A673 (cell line): ENCODE measurements at regions of chr5 and their contacts with region 1.

Region 1: DNA sequence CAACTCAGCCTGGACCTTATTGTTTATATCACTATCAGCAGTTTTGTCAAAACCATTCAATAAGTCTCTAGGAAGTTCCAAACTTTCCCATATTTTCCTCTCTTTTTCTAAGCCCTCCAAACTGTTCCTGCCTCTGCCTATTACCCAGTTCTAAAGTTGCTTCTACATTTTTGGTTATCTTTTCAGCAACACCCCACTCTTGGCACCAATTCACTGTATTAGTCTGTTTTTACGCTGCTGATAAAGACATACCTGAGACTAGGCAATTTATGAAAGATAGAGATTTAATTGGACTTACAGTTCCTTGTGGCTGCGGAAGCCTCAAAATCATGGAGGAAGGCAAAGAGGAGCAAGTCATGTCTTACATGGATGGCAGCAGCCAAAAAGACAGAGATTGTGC is 744.4 kb upstream of the ADAMTS16 start:
- DNase-seq: no peak
- H3K4me3 ChIP-seq: no peak overlapping the region
- H3K27ac ChIP-seq: no peak overlapping the region
- H3K4me1 ChIP-seq: no peaks in the 10 kb centered on the region
- H3K27me3 ChIP-seq: no peaks in the 10 kb centered on the region
- CTCF ChIP-seq: no peak

Region 2: DNA sequence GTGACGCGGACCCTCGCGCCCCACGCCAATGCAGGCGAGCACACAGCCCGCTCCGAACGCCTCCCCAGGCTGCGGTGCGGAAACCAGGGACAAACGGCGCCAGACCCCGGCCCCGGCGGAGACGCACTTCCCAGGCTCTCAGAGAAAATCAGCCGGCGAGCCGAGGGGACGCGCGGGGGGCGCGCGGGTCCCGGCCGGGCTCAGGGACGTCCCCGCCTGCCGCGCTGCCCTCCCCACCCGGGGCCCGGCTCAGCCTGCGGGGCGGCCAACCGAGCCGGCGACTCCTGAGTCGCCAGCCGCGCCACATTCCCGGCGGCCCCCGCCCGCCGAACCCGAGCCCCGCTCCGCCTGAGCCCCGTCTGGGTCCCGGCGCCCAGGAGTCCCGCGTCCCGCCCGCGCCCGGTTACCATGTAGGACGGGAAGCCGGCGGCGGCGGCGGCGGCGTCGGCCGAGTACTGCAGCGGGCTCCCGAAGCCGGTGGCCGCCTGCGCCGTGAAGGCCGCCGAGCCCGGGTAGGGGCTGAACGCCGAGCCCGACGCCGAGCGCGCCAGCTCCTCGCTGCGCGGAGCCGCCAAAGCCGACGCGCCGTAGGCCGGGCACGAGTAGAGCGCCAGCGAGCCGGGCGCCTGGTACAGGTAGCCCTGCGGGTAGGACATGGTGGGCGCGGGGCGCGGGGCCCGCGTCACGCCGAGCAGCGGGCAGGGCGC is 1644.8 kb before region 1 on chr5:
- CTCF ChIA-PET with region 1: no interaction called
- POLR2A ChIA-PET with region 1: no interaction called
- intact Hi-C with region 1: no loop called
- DNase-seq: no peak
- H3K4me3 ChIP-seq: no peak overlapping the region
- H3K27ac ChIP-seq: no peak overlapping the region
- H3K4me1 ChIP-seq: no peaks in the 10 kb centered on the region
- H3K27me3 ChIP-seq: peaks cover 11% of the 10 kb centered on the region
- CTCF ChIP-seq: no peak

Region 3: GRCh38 chr5:3931976-3932375 is 463.8 kb before region 1 on chr5:
- CTCF ChIA-PET with region 1: no interaction called
- POLR2A ChIA-PET with region 1: no interaction called
- intact Hi-C with region 1: no loop called
- DNase-seq: no peak
- H3K4me3 ChIP-seq: no peak overlapping the region
- H3K27ac ChIP-seq: no peak overlapping the region
- H3K4me1 ChIP-seq: no peaks in the 10 kb centered on the region
- H3K27me3 ChIP-seq: no peaks in the 10 kb centered on the region
- CTCF ChIP-seq: no peak

Region 4: DNA sequence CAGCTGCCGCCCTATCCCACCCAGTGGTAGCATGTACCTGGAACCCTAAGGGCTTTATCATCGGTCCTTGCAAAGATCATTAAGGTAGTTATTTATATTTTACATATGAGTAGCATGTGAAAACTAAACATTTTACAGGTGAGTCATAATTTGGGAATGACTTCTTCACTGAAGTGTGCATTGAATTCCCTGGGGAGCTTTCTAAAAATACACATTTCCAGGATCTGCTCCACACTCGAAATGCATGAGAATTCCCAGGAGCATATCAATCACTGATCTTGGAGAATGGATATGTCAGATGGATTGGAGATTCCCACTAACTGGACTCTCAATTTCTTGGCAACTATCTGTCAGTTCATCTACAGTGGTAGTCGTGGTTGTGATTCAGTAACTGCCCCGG is 82.6 kb before region 1 on chr5:
- CTCF ChIA-PET with region 1: no interaction called
- POLR2A ChIA-PET with region 1: no interaction called
- intact Hi-C with region 1: loop called (anchors 2 kb)
- DNase-seq: no peak
- H3K4me3 ChIP-seq: no peak overlapping the region
- H3K27ac ChIP-seq: no peak overlapping the region
- H3K4me1 ChIP-seq: no peaks in the 10 kb centered on the region
- H3K27me3 ChIP-seq: no peaks in the 10 kb centered on the region
- CTCF ChIP-seq: no peak

Region 5: GRCh38 chr5:4614088-4614487 is 218.3 kb after region 1 on chr5:
- CTCF ChIA-PET with region 1: no interaction called
- POLR2A ChIA-PET with region 1: no interaction called
- intact Hi-C with region 1: no loop called
- DNase-seq: no peak
- H3K4me3 ChIP-seq: no peak overlapping the region
- H3K27ac ChIP-seq: no peak overlapping the region
- H3K4me1 ChIP-seq: no peaks in the 10 kb centered on the region
- H3K27me3 ChIP-seq: no peaks in the 10 kb centered on the region
- CTCF ChIP-seq: no peak